Activated CD4-positive, alpha-beta T cell treated with anti-CD3 and anti-CD28 coated beads, Interleukin-2, amount 10 ng/mL, durations not matched to agents 24 days and 14 days (primary cell): ENCODE measurements at regions of chr1 and their contacts with region 1.

Region 1: DNA sequence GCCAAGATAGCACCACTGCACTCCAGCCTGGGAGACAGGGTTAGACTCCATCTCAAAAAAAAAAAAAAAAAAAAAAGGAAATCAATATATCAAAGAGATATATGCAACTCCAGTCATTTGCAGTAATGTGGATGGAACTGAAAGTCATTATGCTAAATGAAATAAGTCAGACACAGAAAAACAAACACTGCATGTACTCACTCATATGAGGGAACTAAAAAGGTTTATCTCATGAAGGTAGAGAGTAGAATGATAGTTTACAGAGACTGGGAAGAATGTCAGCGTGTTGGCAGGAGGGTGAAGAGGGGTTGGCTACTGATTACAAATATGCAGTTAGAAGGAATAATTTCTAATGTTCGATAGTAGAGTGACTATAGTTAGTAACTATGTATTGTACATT is 13.2 kb downstream of the HSD11B1 start:
- DNase-seq: no peak
- H3K4me3 Mint-ChIP-seq: peak overlapping the region; percentile 39
- H3K27ac Mint-ChIP-seq: peak overlapping the region; percentile 92
- H3K4me1 Mint-ChIP-seq: peaks cover 51% of the 10 kb centered on the region
- H3K27me3 Mint-ChIP-seq: no peaks in the 10 kb centered on the region

Region 2: GRCh38 chr1:209736490-209737117 is 18.8 kb after region 1 on chr1:
- intact Hi-C with region 1: loop called (anchors 1 kb)
- DNase-seq: no peak
- H3K4me3 Mint-ChIP-seq: peak overlapping the region; percentile 34
- H3K27ac Mint-ChIP-seq: peak overlapping the region; percentile 93
- H3K4me1 Mint-ChIP-seq: peaks cover 54% of the 10 kb centered on the region
- H3K27me3 Mint-ChIP-seq: no peaks in the 10 kb centered on the region

Region 3: DNA sequence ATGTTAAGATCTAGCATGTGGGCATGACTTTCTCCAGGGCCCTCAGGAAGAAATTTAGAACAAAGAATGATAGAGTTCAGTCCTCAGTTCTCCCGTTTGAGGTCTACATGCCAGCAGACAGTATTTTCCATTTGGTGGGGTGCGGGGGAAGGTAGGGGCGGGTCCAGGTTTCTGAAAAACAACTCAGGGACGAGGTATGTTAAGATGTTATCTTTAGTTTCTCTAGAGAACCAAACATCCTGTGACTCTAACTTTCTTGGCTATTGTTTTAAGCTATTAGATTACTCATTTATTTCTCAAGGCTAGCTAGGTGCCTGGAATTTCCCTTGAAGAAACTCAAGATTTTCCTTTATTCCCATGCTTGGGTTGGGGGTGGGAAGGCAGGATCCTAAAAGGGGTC is 177.9 kb after region 1 on chr1:
- intact Hi-C with region 1: no loop called
- DNase-seq: peak; percentile 54
- H3K4me3 Mint-ChIP-seq: peak overlapping the region; percentile 3
- H3K27ac Mint-ChIP-seq: peak overlapping the region; percentile 57
- H3K4me1 Mint-ChIP-seq: peaks cover 9% of the 10 kb centered on the region
- H3K27me3 Mint-ChIP-seq: peaks cover 8% of the 10 kb centered on the region